Heart right ventricle (tissue), 16 donors: ENCODE measurements at regions of chr1 and their contacts with region 1.

Region 1: DNA sequence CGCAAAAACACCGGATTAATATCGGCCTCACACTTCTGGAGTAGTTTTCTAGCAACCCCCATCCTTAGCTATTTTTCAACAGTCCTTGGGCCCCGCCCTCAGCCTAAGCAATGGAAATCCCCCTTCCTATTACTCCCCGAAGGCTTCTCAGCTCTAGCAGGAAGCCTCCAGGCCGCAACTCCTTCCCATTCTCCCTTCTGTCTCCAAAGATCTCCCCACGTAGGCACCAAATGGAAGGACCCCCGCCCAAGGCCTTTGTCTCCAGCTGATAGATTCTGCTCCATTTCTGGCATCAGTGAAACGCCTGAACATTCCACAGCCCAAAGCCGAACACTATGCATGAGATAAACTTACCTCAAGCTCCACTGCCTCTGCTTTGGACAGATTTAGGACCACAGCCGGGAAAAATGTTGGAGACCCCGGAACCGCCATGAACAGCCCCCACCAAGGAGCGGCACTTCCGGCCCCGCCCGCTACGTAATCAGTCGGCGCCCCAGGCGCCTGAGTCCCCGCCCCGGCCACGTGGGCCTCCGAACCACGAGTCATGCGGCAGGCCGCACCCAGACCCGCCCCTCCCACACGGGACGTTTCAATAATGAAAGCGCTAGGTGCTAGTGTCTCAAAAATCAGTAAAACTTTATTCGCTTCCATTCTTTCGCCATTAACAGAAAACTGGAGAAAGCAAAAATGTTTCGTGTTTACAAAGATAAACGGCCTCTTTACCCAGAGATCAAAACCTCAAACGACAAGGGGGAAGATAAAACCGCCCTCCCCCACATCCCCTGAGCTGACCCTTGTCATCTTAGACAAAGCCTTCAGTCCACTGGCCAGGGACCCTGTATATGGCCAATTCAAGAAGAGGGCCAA is at the start of gene NRAS:
- DNase-seq: peak; percentile 93 to 95
- ATAC-seq: peak; percentile 99 to 100 (median 100)
- H3K4me3 ChIP-seq: peak within 1 kb of the TSS; percentile 62 to 91 (median 76)
- H3K27ac ChIP-seq: peak within 1 kb of the TSS; percentile 48 to 95 (median 88)
- H3K4me1 ChIP-seq: peaks cover 4 to 32% (median 25%) of the 10 kb centered on the region in 9 donors
- H3K27me3 ChIP-seq: no peaks in the 10 kb centered on the region
- CTCF ChIP-seq: no peak
- total RNA-seq, gene NRAS: 6.2 to 17.2 (median 8.6) TPM

Region 2: GRCh38 chr1:114581335-114582287 is 134.9 kb before region 1 on chr1 and contains the start of gene BCAS2:
- intact Hi-C with region 1: loop called in 4 of 10 experiments (anchors 5 to 10 kb)
- DNase-seq: peak; percentile 91 to 98
- ATAC-seq: peak; percentile 97 to 100 (median 99)
- H3K4me3 ChIP-seq: peak within 1 kb of the TSS; percentile 59 to 86 (median 64)
- H3K27ac ChIP-seq: peak within 1 kb of the TSS; percentile 75 to 91 (median 88)
- H3K4me1 ChIP-seq: peaks cover 8 to 44% (median 29%) of the 10 kb centered on the region in 9 donors
- H3K27me3 ChIP-seq: no peaks in the 10 kb centered on the region
- CTCF ChIP-seq: no peak
- total RNA-seq, gene BCAS2: 26.9 to 52.6 (median 36.4) TPM

Region 3: DNA sequence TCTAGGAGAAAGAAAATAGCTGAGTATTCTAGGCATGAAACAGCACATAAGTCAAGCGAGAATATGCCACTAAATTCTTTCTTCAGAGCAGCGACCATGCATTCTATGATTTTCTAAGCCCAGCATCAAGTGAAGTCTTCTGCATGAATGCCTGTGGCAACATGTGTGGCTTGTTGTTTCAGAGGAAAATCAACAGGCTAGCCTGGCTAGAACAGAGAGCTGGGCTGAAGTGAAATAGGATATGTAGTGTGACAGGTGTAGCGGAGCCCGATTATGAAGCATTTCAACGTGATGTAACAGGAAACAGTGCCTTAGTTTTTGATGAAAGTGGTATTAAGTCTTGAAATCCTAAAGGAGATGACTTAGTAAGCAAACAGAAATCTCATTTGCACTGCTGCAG is 34.2 kb after region 1 on chr1:
- intact Hi-C with region 1: loop called in 2 of 10 experiments (anchors 5 kb)
- DNase-seq: no peak
- ATAC-seq: peak in 2 of 8 donors; percentile 35 to 36
- H3K4me3 ChIP-seq: no peak overlapping the region
- H3K27ac ChIP-seq: peak overlapping the region in 3 of 10 donors; percentile 18 to 58 (median 46)
- H3K4me1 ChIP-seq: peaks cover 6 to 100% (median 98%) of the 10 kb centered on the region in 9 donors
- H3K27me3 ChIP-seq: no peaks in the 10 kb centered on the region
- CTCF ChIP-seq: no peak

Region 4: DNA sequence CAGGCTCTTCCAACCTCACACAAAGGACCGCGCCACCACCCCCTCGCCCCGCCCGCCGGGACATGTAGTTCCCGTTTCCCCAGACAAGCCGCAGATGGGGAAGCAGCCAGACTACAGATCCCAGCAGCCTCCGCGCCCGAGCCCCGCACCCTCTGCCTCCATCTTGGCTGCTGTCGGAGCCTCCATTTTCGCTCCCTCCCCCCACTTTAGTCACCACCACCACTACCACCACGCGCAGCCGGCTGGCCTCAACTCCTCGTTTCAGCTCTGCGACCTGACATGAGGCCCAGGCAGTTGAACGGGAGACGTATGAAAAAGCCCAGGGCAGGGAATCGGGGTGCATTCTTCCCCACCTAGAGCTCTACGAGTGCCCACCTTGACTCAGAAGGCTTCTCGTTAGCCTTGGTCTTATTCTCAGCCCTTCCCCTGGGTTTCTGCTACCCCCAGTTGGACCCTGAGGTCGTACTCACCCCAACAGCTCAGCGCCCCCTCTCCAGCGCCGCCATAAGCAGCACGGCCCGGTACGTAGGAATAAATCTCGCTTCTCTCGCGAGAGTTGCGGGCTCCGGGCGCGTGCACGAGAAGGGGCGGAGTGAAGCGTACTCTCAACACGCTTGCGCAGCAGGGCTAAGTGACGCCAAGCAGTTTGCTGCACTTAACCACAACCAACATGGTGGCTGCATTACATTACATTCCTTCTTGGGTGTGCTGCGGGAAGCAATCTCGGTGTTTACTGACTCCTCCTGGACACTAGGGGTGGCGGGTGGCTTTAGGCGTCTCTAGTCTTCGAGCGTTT is 41.1 kb after region 1 on chr1 and contains the start of gene CSDE1:
- intact Hi-C with region 1: loop called in 2 of 10 experiments (anchors 5 kb)
- DNase-seq: peak; percentile 95 to 98
- ATAC-seq: peak; percentile 97 to 99 (median 98)
- H3K4me3 ChIP-seq: peak within 1 kb of the TSS; percentile 70 to 97 (median 92)
- H3K27ac ChIP-seq: peak within 1 kb of the TSS; percentile 92 to 100 (median 98)
- H3K4me1 ChIP-seq: peaks cover 3 to 52% (median 45%) of the 10 kb centered on the region in 9 donors
- H3K27me3 ChIP-seq: no peaks in the 10 kb centered on the region
- CTCF ChIP-seq: peak in 7 of 9 donors; percentile 37 to 64 (median 42)
- total RNA-seq, gene CSDE1: 720 to 1,012 (median 916) TPM

Region 5: GRCh38 chr1:114780344-114781226 is 64.0 kb after region 1 on chr1 and contains the start of gene SIKE1:
- intact Hi-C with region 1: loop called in 2 of 10 experiments (anchors 2 to 5 kb)
- DNase-seq: peak; percentile 89 to 92
- ATAC-seq: peak; percentile 95 to 99 (median 99)
- H3K4me3 ChIP-seq: peak within 1 kb of the TSS; percentile 68 to 95 (median 78)
- H3K27ac ChIP-seq: peak within 1 kb of the TSS; percentile 30 to 92 (median 88)
- H3K4me1 ChIP-seq: peaks cover 0 to 22% (median 13%) of the 10 kb centered on the region in 9 donors
- H3K27me3 ChIP-seq: peaks cover 0 to 8% (median 3%) of the 10 kb centered on the region in 7 donors
- CTCF ChIP-seq: peak in 3 of 9 donors; percentile 19 to 31 (median 27)
- total RNA-seq, gene SIKE1: 20.8 to 38.2 (median 31.3) TPM